B cell (primary cell): ENCODE measurements at regions of chr10 and their contacts with region 1.

Region 1: DNA sequence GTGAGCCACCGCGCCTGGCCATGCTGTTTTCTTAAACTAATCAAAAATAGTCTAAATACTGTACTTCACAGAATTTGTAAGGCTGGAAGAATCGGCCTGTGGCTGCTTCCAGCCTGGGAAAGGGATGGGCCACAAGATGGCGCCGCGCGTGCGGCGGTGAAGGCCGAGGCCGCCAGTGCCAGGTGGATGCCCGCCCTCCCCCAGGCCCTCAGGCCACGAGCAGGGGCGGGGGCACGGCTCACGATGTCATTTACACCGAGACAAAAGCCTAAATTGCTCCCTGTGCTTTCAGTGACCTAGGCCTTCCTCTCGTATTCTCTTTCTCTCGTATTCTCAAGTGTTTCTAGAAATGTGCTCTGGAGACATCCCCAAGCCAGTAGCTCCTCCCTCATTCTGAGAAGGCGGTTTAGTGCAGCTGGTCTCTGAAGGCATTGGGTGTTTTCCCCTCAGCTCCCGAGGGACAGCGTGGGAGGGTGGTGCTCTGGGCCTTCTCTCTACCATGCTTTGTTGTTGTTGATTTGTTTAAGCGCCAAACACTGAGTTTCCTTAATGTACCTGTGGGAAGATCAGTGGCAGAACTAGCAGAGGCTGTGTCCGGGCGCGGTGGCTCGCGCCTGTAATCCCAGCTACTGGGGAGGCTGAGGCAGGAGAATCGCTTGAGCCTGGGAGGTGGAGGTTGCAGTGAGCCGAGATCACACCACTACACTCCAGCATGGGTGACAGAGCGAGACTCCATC is 68.4 kb downstream of the CDC123 start:
- DNase-seq: peak; percentile 99
- ATAC-seq: peak; percentile 89
- H3K4me3 ChIP-seq: peak overlapping the region in 4 of 5 experiments; percentile 18 to 34 (median 22)
- H3K4me3 Mint-ChIP-seq: peak overlapping the region; percentile 79
- H3K27ac ChIP-seq: peak overlapping the region; percentile 86 to 100
- H3K27ac Mint-ChIP-seq: peak overlapping the region; percentile 99
- H3K4me1 ChIP-seq: peaks cover 51 to 62% of the 10 kb centered on the region in 2 donors
- H3K4me1 Mint-ChIP-seq: peaks cover 50% of the 10 kb centered on the region
- H3K27me3 ChIP-seq: no peaks in the 10 kb centered on the region
- H3K27me3 Mint-ChIP-seq: no peaks in the 10 kb centered on the region
- CTCF ChIP-seq: peak; percentile 56

Region 2: GRCh38 chr10:12241810-12242529 is 22.4 kb before region 1 on chr10:
- CTCF ChIA-PET with region 1: interaction called, 10 read pairs
- POLR2A ChIA-PET with region 1: interaction called, 13 read pairs
- intact Hi-C with region 1: loop called (anchors 1 kb)
- DNase-seq: peak; percentile 71
- ATAC-seq: no peak
- H3K4me3 ChIP-seq: no peak overlapping the region
- H3K4me3 Mint-ChIP-seq: peak overlapping the region; percentile 77
- H3K27ac ChIP-seq: peak overlapping the region; percentile 95
- H3K27ac Mint-ChIP-seq: peak overlapping the region; percentile 99
- H3K4me1 ChIP-seq: peaks cover 58 to 62% of the 10 kb centered on the region in 2 donors
- H3K4me1 Mint-ChIP-seq: peaks cover 60% of the 10 kb centered on the region
- H3K27me3 ChIP-seq: no peaks in the 10 kb centered on the region
- H3K27me3 Mint-ChIP-seq: no peaks in the 10 kb centered on the region
- CTCF ChIP-seq: no peak

Region 3: DNA sequence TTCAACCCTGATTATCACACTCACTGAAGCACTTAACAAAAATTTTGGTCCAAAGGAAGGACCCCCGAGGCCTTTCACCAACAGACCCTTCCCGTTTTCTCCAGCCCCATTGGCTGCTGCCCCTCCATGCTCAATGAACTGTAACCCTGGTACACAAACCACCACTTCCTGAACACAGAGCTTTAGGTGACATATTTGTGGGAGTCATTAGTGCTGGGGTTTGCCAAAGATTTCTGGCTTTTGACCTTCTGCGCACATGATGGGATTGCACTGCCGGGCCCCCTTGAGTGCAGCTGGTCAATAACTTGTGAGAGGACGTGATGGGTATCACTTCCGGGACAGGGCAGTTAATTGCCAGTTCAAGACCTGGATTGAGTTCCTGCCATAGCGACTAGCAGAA is 76.0 kb after region 1 on chr10:
- CTCF ChIA-PET with region 1: no interaction called
- POLR2A ChIA-PET with region 1: no interaction called
- intact Hi-C with region 1: loop called (anchors 2 kb)
- DNase-seq: peak; percentile 35
- ATAC-seq: no peak
- H3K4me3 ChIP-seq: peak overlapping the region in 1 of 5 experiments; percentile 28
- H3K4me3 Mint-ChIP-seq: peak overlapping the region; percentile 65
- H3K27ac ChIP-seq: peak overlapping the region; percentile 79 to 92
- H3K27ac Mint-ChIP-seq: peak overlapping the region; percentile 76
- H3K4me1 ChIP-seq: peaks cover 37 to 40% of the 10 kb centered on the region in 2 donors
- H3K4me1 Mint-ChIP-seq: peaks cover 57% of the 10 kb centered on the region
- H3K27me3 ChIP-seq: no peaks in the 10 kb centered on the region
- H3K27me3 Mint-ChIP-seq: no peaks in the 10 kb centered on the region
- CTCF ChIP-seq: no peak

Region 4: DNA sequence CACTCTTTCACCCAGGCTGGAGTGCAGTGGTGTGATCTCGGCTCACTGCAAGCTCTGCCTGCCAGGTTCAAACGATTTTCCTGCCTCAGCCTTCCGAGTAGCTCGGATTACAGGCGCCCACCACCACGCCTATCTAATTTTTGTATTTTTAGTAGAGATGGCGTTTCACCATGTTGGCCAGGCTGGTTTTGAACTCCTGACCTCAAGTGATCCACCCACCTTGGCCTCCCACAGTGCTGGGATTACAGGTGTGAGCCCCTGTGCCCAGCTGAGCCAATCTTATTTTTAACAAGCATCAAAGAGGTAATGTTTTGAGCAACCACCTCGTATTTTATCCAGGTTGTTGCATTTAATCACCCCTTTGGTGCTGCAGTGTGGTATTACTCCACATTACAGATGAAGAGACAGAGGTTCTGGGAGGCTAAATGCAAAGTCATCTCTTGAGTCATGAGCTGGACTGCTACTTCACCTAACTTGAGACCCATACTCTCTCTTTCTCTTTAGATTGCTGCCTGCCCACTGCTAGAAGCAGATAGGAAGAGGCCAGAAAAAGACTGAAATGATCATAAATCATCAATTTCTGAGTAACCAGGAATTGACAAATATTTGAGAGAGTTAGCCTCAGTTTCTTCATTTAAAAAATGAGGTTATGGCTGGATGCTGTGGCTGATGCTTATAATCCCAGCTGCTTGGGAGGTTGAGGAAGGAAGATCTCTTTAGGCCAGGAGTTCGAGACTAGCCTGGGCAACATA is 201.2 kb after region 1 on chr10:
- CTCF ChIA-PET with region 1: no interaction called
- POLR2A ChIA-PET with region 1: no interaction called
- intact Hi-C with region 1: no loop called
- DNase-seq: no peak
- ATAC-seq: no peak
- H3K4me3 ChIP-seq: no peak overlapping the region
- H3K4me3 Mint-ChIP-seq: no peak overlapping the region
- H3K27ac ChIP-seq: no peak overlapping the region
- H3K27ac Mint-ChIP-seq: no peak overlapping the region
- H3K4me1 ChIP-seq: peaks cover 4 to 11% of the 10 kb centered on the region in 2 donors
- H3K4me1 Mint-ChIP-seq: peaks cover 68% of the 10 kb centered on the region
- H3K27me3 ChIP-seq: no peaks in the 10 kb centered on the region
- H3K27me3 Mint-ChIP-seq: no peaks in the 10 kb centered on the region
- CTCF ChIP-seq: no peak

Region 5: DNA sequence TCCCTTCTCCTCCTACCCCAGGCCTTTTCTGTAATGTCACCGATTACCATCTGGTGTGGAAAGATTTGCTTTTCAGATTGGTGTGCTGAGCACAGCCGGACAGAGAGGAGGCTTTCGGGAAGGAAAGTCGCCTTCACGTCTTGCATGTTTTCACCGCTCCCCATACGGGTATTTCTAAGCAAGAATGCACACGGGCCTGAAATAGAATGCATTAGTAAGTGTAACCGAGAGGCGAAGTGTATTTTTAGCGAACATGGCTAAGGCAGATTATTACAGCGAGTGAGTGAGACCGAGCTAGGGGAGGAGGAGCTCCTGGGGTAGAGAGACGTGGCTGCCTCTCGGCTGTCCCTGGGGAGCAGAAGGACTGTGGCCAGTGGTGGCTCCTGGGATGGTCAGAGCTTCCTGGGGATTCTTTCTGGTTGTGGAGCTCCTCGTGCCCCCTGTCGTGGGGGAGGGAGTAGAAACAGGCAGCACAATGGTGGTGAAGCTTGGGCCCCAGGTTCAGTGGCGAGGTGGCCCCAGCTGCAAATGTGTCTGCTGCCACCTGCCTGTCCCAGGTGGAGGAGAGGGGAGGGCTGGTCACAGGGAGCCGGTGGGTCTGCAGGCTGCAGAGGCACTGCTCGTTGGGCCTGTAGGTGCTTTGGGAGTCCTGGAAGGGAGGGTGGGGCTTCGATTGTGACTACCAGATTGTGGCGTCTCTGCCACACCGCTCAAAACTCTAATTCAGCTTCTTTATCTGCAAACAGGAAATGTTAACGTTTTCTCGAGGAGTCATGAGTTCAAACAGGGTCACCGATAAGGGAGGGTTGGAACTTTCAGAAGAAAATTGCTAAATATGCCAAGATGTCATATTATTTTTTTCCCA is 220.8 kb after region 1 on chr10:
- CTCF ChIA-PET with region 1: interaction called, 14 read pairs
- POLR2A ChIA-PET with region 1: no interaction called
- intact Hi-C with region 1: no loop called
- DNase-seq: peak; percentile 61
- ATAC-seq: peak; percentile 72
- H3K4me3 ChIP-seq: peak overlapping the region in 4 of 5 experiments; percentile 9 to 39 (median 17)
- H3K4me3 Mint-ChIP-seq: peak overlapping the region; percentile 88
- H3K27ac ChIP-seq: peak overlapping the region; percentile 54 to 61
- H3K27ac Mint-ChIP-seq: peak overlapping the region; percentile 92
- H3K4me1 ChIP-seq: peaks cover 28 to 38% of the 10 kb centered on the region in 2 donors
- H3K4me1 Mint-ChIP-seq: peaks cover 59% of the 10 kb centered on the region
- H3K27me3 ChIP-seq: no peaks in the 10 kb centered on the region
- H3K27me3 Mint-ChIP-seq: no peaks in the 10 kb centered on the region
- CTCF ChIP-seq: peak; percentile 32